ENCODE measurements at regions of chr15 and their contacts with region 1.

Region 1: DNA sequence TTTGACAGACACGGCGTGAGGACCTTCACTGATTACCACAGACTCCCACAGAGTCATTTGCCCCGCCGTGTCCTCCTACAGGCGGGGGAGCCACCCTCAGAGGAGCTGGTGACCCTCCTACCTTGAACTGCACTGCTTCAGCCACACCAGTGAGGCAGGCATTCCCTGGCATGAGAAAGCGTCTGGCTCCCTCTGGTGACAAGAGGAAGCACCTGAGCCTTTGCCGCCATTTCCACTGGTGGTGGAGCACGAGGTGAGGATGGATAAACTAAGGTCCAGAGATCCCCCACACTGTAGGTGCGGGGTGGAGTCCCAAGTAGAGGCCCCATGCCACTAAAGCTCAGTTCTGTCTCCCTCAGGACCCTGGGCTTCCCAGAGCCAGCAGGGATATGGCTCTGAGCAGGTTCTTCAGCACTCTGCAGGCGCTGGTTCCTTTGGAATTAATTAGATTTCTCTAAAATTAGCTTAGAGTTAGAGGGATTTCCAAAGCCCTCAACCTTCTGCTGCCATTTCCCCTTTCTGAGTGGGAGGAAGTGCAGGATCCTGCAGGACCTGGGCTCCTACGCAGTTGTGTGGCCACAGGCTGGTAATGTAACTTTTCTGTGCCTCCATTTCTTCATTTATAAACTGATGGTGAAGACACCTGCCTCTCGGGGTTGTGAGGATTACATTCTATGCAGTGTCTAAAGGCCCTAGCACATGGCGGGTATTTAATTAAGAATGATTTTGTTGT is 224.0 kb downstream of the SLCO3A1 start:
- DNase-seq: peak; percentile 74
- H3K4me3 ChIP-seq: no peak overlapping the region; a peak in 1 of 4 replicates
- H3K27ac ChIP-seq: no peak overlapping the region
- H3K4me1 ChIP-seq: peaks cover 0 to 16% of the 10 kb centered on the region in 2 experiments; a peak in 2 of 4 replicates
- H3K27me3 ChIP-seq: no peaks in the 10 kb centered on the region
- CTCF ChIP-seq: peak; percentile 80
- EP300 ChIP-seq: no peak
- RAD21 ChIP-seq: peak; percentile 94

Region 2: DNA sequence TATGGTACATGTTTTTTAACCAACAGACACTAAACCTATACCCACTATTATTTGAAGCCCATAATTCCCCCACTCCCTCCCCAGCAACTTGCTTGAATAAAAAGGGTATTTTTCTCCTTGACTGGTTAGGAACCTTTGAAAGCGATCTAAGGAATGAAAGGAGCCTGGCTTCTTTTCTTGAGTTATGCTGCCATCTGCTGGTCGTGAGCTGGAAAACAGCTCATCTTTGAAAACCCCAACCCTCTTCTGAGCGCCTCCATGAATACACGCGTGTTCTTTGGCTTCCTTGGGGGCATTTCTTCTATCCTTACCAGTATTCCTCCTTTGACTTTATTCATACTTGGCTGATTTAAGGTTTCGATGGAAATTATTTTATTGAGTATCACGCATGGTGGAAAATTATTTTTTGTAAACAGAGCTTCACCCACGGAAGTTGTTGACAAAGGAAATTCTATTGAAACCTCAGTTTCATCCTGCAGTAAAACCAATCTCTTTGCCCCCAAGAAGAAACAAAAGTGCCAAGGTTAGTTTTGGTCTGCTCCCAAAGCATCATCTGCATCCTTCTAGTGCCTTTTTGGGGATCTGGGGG is 805.9 kb before region 1 on chr15:
- CTCF ChIA-PET with region 1: interaction called, 10 read pairs
- POLR2A ChIA-PET with region 1: no interaction called
- DNase-seq: peak; percentile 69
- H3K4me3 ChIP-seq: peak overlapping the region in 1 of 2 experiments; percentile 42; a peak in 1 of 4 replicates
- H3K27ac ChIP-seq: no peak overlapping the region
- H3K4me1 ChIP-seq: no peaks in the 10 kb centered on the region
- H3K27me3 ChIP-seq: no peaks in the 10 kb centered on the region
- CTCF ChIP-seq: peak; percentile 86
- EP300 ChIP-seq: no peak
- RAD21 ChIP-seq: peak; percentile 95

Region 3: GRCh38 chr15:91302588-91303439 is 774.7 kb before region 1 on chr15:
- CTCF ChIA-PET with region 1: interaction called, 73 read pairs
- POLR2A ChIA-PET with region 1: no interaction called
- DNase-seq: peak; percentile 83
- H3K4me3 ChIP-seq: peak overlapping the region in 1 of 2 experiments; percentile 16; a peak in 1 of 4 replicates
- H3K27ac ChIP-seq: no peak overlapping the region
- H3K4me1 ChIP-seq: peaks cover 0 to 4% of the 10 kb centered on the region in 2 experiments; a peak in 3 of 4 replicates
- H3K27me3 ChIP-seq: peaks cover 10% of the 10 kb centered on the region
- CTCF ChIP-seq: peak; percentile 80
- EP300 ChIP-seq: no peak
- RAD21 ChIP-seq: peak; percentile 99

Region 4: GRCh38 chr15:91852741-91853510 is 224.6 kb before region 1 on chr15:
- CTCF ChIA-PET with region 1: interaction called, 112 read pairs
- POLR2A ChIA-PET with region 1: no interaction called
- DNase-seq: peak; percentile 91
- H3K4me3 ChIP-seq: peak overlapping the region; percentile 80 to 93
- H3K27ac ChIP-seq: peak overlapping the region; percentile 73 to 81
- H3K4me1 ChIP-seq: peaks cover 19 to 20% of the 10 kb centered on the region in 2 experiments
- H3K27me3 ChIP-seq: no peaks in the 10 kb centered on the region
- CTCF ChIP-seq: peak; percentile 76
- EP300 ChIP-seq: no peak
- RAD21 ChIP-seq: peak; percentile 66

Region 5: GRCh38 chr15:92011611-92012367 is 65.7 kb before region 1 on chr15:
- CTCF ChIA-PET with region 1: no interaction called
- POLR2A ChIA-PET with region 1: no interaction called
- DNase-seq: no peak
- H3K4me3 ChIP-seq: no peak overlapping the region
- H3K27ac ChIP-seq: no peak overlapping the region
- H3K4me1 ChIP-seq: peaks cover 8 to 10% of the 10 kb centered on the region in 2 experiments; a peak in 2 of 4 replicates
- H3K27me3 ChIP-seq: no peaks in the 10 kb centered on the region
- CTCF ChIP-seq: no peak
- EP300 ChIP-seq: no peak
- RAD21 ChIP-seq: no peak

Region 6: GRCh38 chr15:92059056-92059960 is 18.2 kb before region 1 on chr15:
- CTCF ChIA-PET with region 1: interaction called, 11 read pairs
- POLR2A ChIA-PET with region 1: interaction called, 3 read pairs
- DNase-seq: peak; percentile 67
- H3K4me3 ChIP-seq: no peak overlapping the region
- H3K27ac ChIP-seq: no peak overlapping the region
- H3K4me1 ChIP-seq: peaks cover 0 to 10% of the 10 kb centered on the region in 2 experiments; a peak in 1 of 4 replicates
- H3K27me3 ChIP-seq: no peaks in the 10 kb centered on the region
- CTCF ChIP-seq: no peak
- EP300 ChIP-seq: no peak
- RAD21 ChIP-seq: no peak

Measured in SK-N-SH (cell line).